HEK293T (cell line): ENCODE measurements at regions of chr10 and their contacts with region 1.

Region 1: GRCh38 chr10:72058989-72059842 is 29.1 kb downstream of the SPOCK2 start:
- DNase-seq: no peak

Region 2: DNA sequence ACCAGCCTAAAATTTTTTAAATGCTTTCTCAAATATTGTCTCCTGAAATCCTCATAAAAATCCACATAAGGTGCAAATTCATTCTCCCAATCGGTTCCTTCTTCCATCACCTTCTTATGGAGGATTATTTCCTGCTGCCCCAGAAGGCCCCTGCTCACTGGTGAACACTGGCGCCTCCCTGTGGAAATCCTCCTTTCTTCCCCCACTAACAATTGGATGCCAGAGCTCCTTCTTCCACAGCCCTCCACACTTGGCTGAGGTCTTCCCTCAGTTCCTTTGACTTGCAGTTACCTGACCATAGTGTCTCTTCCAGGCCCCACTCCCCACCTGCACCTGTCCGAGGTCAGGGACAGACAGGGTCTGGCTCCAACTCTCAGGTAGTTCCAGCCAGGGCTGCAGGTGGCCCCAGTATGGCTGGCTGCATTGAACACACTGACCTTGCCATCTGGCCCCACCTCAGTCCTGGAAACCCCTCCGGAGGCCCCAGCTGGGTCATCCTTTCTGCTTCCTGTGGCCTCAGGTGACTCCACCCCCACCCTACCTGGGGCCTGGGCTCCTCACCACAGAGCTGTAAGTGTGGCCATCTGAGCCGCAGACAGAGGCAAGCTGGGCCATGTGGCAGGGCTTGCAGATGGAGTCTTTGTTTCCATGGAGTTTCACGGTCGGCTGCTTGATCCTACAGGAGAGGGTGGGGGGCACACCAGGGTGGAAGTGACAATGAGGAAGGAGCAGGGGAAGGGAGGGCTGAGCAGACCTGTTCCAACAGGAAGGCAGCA is 10.7 kb after region 1 on chr10:
- CTCF ChIA-PET with region 1: interaction called, 10 read pairs
- POLR2A ChIA-PET with region 1: interaction called, 4 read pairs
- DNase-seq: peak; percentile 56

Region 3: GRCh38 chr10:72083790-72084459 is 24.7 kb after region 1 on chr10:
- CTCF ChIA-PET with region 1: no interaction called
- POLR2A ChIA-PET with region 1: no interaction called
- DNase-seq: no peak